Left cardiac atrium (tissue), 4 donors: ENCODE measurements at regions of chr3 and their contacts with region 1.

Region 1: DNA sequence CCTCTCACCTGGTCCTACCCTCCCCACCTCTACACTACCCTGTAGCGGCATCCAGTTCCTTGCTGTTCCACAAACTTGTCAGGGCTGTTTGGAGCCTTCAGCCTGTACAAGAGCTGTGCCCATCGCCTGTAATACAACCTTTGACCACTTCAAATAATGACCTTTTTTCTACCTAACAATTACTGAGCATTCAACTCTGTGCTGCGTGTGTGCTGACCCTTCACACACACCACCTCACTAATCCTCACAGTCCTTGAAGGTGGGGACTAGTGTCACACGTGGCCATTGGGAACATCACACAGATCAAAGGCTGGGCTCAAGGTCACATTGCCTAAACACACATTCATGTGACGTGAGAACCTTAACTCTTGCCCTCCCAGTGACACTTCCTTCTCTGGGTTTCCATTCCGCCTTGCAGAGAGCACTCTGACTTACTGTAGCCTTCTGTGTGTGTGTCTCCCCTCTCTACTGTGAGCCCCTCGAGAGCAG is 3.1 kb downstream of the C3orf20 start:
- DNase-seq: no peak
- ATAC-seq: no peak

Region 2: DNA sequence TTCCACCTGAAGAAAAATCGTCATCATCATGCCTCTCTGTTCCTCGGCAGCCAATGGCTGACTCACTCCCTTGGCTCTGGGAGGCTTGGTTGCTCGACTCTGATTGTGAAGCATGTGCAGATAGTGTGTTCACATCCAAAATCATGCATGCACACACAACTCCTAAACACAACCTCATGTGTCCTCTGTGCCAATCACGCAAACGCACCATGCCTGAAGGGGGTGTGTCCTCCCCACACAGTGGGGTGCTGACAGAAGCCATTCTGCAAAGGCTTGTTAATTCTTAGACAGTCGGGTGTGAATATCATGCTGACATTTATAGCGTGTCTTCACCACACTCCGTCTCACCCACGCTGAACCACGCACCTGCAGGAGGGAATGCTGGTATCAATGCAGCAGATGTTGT is 37.9 kb before region 1 on chr3:
- intact Hi-C with region 1: no loop called
- DNase-seq: no peak
- ATAC-seq: no peak

Region 3: DNA sequence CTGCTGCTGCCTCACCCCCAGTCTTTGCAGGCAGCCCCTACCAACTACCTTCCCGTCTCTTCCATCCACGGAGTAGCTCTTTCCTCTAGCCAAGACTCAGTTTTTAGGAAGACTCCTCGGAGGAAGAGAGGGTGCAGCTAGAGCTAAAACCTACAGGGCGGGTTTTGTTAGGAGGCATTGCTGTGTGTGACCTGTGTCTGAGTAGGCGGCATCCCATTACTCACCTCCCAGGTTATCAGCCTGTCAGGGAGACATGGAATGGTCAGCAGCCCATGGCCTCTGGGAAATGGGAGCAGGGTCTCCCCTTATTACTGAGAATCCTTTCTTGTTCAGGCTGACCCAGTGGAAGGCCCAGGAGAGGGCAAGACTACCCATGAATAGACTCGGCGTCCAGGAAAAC is 97.0 kb after region 1 on chr3:
- intact Hi-C with region 1: loop called (anchors 5 kb)
- DNase-seq: no peak
- ATAC-seq: no peak

Region 4: DNA sequence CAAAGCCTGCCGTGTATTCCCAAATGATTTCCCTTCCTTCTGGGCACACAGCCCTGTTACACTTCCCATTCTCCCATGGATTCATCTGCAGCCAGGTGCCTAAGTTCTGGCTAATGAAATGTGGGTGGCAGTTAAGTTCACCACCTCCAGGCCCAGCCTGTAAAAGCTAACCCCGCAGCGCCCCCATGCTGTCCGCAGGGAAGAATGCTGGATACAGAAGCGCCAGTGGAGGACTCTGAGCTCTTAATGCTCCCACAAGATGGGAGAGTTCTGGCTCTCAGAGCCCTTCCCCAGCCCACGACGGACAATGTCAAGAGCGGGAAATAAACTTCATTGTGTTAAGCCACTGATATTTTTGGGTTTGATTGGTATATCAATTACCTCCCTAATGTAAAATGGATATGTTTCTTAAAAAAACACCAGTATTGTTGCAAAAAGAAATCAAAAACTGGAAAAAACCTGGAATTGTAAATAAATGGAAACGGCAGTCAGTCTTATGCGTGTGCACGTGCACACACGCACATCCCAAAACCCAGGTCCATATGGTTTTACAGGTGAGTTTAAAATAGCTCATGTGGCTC is 103.0 kb after region 1 on chr3:
- intact Hi-C with region 1: loop called (anchors 5 kb)
- DNase-seq: peak; percentile 71
- ATAC-seq: peak; percentile 80 to 86

Region 5: GRCh38 chr3:14863333-14864100 is 185.5 kb after region 1 on chr3:
- intact Hi-C with region 1: no loop called
- DNase-seq: no peak
- ATAC-seq: peak in 1 of 2 donors; percentile 20

Region 6: GRCh38 chr3:14921078-14921616 is 243.1 kb after region 1 on chr3:
- intact Hi-C with region 1: loop called (anchors 1 to 5 kb)
- DNase-seq: peak; percentile 89
- ATAC-seq: peak; percentile 93

Region 7: GRCh38 chr3:16026753-16027152 is 1348.7 kb after region 1 on chr3:
- intact Hi-C with region 1: no loop called
- DNase-seq: no peak
- ATAC-seq: no peak